Activated CD4-positive, alpha-beta memory T cell treated with anti-CD3 and anti-CD28 coated beads for 36 hours (primary cell): ENCODE measurements at regions of chr2 and their contacts with region 1.

Region 1: GRCh38 chr2:73828818-73829570 is at the start of gene STAMBP:
- DNase-seq: peak; percentile 95
- H3K4me3 Mint-ChIP-seq: peak within 1 kb of the TSS; percentile 96
- H3K27ac Mint-ChIP-seq: peak within 1 kb of the TSS; percentile 91
- H3K4me1 Mint-ChIP-seq: peaks cover 53% of the 10 kb centered on the region
- H3K27me3 Mint-ChIP-seq: no peaks in the 10 kb centered on the region
- total RNA-seq, gene STAMBP: 79.9 to 85.3 TPM

Region 2: DNA sequence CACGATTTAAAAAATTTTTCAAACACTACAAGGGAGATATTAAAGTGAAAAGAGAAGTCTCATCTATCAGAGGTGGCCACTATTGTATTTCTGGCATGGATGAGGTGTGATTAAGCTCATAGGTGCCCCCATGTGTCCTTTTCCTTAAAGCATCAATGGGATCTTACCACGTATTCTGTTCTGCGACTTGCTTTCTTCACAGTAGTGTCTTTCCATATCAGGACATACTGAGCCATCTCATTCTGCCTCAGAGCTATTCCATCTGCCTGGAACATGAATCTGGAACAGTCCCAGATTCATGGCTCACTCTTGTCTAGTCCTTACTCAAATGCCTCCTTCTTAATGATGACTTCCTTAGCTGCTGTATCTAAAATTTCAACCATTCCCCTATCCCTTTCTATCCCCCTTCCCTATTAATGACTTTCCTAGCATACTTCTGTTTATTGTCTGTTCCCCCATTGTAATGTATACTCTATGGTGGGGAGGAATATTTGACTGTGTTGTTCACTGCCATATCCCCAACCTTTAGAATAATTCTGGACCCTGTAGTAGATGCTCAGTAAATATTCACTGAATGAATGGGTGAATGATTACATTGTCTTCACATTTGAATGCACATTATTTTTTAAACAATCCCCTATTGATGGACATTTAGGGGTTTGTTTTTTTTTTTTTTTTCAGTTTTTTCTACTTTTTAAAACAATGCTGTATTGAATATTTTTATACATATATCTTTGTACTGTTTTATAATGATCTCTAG is 10.8 kb after region 1 on chr2:
- CTCF ChIA-PET with region 1: interaction called, 12 read pairs
- POLR2A ChIA-PET with region 1: no interaction called
- intact Hi-C with region 1: no loop called
- DNase-seq: no peak
- H3K4me3 Mint-ChIP-seq: no peak overlapping the region
- H3K27ac Mint-ChIP-seq: no peak overlapping the region
- H3K4me1 Mint-ChIP-seq: peaks cover 22% of the 10 kb centered on the region
- H3K27me3 Mint-ChIP-seq: no peaks in the 10 kb centered on the region

Region 3: GRCh38 chr2:73896362-73897239 is 67.6 kb after region 1 on chr2:
- CTCF ChIA-PET with region 1: interaction called, 3 read pairs
- POLR2A ChIA-PET with region 1: no interaction called
- intact Hi-C with region 1: loop called (anchors 2 kb)
- DNase-seq: peak; percentile 62
- H3K4me3 Mint-ChIP-seq: no peak overlapping the region
- H3K27ac Mint-ChIP-seq: peak overlapping the region; percentile 73
- H3K4me1 Mint-ChIP-seq: peaks cover 23% of the 10 kb centered on the region
- H3K27me3 Mint-ChIP-seq: no peaks in the 10 kb centered on the region

Region 4: GRCh38 chr2:73979686-73980085 is 150.7 kb after region 1 on chr2:
- CTCF ChIA-PET with region 1: no interaction called
- POLR2A ChIA-PET with region 1: interaction called, 3 read pairs
- intact Hi-C with region 1: loop called (anchors 2 kb)
- DNase-seq: peak; percentile 33
- H3K4me3 Mint-ChIP-seq: peak overlapping the region; percentile 53
- H3K27ac Mint-ChIP-seq: peak overlapping the region; percentile 78
- H3K4me1 Mint-ChIP-seq: peaks cover 62% of the 10 kb centered on the region
- H3K27me3 Mint-ChIP-seq: no peaks in the 10 kb centered on the region

Region 5: DNA sequence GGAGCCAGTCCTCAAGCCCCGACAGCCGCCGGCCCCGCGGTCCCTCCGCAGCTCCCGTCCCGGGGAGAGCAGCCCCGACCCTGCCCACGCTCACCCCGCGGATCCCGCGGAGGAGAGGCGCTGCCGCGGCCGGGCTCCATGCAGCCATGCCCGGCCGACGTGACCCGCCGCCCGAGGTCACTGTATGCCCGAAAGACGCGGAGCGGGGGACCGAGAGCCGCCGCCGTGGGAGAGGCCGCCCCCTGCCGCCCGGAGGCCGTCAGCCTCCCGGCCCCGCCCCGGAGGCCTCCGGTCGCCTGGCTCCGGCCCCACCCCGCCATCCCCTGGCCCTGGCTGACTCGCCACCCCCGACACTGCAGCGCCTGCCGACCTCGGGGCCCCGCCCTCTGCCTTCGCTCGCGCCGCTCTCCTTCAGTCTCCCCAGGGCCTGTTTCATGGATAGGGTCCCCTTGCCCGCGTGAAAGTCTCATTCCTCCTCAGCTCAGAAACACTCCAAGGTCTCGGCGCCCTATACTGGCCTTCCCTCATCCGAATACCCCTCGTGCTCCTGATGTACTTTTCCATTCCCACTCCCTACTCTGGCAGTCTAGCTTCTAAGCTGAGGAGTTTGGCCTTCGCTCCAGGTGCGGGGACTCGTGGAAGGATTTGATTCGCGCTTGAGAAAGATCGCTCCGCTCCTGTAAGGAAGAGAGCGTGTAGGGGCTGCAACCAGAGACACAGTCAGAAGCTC is 318.9 kb after region 1 on chr2 and contains the start of gene BOLA3:
- CTCF ChIA-PET with region 1: interaction called, 100 read pairs
- POLR2A ChIA-PET with region 1: interaction called, 6 read pairs
- intact Hi-C with region 1: loop called (anchors 1 kb)
- DNase-seq: peak; percentile 92
- H3K4me3 Mint-ChIP-seq: no peak within 1 kb of the TSS
- H3K27ac Mint-ChIP-seq: no peak within 1 kb of the TSS
- H3K4me1 Mint-ChIP-seq: peaks cover 4% of the 10 kb centered on the region
- H3K27me3 Mint-ChIP-seq: no peaks in the 10 kb centered on the region
- total RNA-seq, gene BOLA3: 97.2 to 99.8 TPM

Region 6: DNA sequence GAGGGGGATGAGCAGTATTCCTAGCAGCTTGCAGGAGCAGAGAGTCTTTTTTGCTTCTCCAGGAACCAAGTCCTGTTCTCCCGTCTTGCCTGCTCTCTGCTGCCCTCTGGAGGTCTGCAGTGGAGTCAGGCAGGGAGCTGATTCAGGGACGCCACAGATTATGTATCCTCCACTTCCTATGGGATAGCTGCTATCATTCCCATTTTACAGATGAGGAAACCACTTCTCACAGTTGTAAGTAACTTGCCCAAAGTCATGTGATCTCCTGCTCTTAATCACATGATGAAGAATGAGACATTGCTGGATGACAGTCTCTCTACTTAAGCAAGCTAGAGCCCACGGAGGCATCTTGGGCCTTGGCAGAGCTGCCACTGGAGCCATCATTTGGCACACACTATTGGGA is 505.9 kb after region 1 on chr2:
- CTCF ChIA-PET with region 1: interaction called, 23 read pairs
- POLR2A ChIA-PET with region 1: no interaction called
- intact Hi-C with region 1: loop called (anchors 10 kb)
- DNase-seq: peak; percentile 81
- H3K4me3 Mint-ChIP-seq: no peak overlapping the region
- H3K27ac Mint-ChIP-seq: no peak overlapping the region
- H3K4me1 Mint-ChIP-seq: peaks cover 5% of the 10 kb centered on the region
- H3K27me3 Mint-ChIP-seq: no peaks in the 10 kb centered on the region